ENCODE measurements at regions of chr4 and their contacts with region 1.

Region 1: DNA sequence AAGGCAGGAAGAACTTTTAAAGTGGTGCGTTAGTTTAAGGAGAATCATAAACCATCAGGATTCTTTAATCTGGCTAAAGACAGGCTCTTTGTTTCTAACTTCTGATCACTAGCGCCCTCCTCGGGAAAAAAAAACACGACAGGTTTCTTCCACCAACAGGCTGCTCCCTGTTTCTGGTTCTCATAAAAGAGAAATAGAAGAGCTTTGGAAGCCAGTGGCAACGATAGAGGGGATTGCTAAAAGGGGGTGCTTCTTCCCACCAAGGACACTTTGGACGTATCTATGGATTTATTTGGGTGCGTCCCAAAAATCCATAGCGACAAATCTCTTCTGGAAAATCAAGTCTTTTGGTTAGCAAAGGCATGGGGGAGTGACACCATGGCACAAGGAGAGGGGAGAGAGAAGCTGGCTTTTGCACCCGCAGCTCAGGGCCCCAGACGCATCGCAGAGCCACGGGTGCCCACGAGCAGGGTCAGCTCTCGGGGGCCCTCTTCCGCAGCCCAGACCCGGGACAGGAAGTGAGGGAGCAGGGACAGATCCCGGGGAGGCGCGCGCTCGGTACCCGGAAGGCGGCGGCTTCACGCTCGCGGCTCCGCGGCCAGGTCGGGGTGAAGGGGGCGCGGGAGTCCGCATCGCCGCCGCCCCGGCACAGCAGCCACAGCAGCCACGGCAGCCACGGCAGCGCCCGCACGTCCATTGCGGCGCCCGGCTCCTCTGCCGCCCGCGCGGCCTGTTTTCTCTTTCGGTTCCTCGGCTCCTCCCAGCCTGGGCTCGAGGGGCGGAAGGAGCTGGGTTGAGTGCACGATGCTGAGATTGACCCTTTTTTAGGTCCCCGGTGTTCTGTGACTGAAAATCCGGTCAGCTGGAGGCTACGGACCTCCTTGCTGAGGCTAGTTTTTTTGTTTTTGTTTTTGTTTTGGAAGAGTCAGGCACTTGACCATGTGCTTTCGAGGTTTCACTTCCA is at the start of gene CTSO:
- DNase-seq: peak; percentile 78
- H3K4me3 Mint-ChIP-seq: peak within 1 kb of the TSS; percentile 95
- H3K27ac Mint-ChIP-seq: peak within 1 kb of the TSS; percentile 98
- H3K4me1 Mint-ChIP-seq: peaks cover 18% of the 10 kb centered on the region
- H3K27me3 Mint-ChIP-seq: peaks cover 4% of the 10 kb centered on the region
- total RNA-seq, gene CTSO: 2.1 to 2.6 TPM

Region 2: DNA sequence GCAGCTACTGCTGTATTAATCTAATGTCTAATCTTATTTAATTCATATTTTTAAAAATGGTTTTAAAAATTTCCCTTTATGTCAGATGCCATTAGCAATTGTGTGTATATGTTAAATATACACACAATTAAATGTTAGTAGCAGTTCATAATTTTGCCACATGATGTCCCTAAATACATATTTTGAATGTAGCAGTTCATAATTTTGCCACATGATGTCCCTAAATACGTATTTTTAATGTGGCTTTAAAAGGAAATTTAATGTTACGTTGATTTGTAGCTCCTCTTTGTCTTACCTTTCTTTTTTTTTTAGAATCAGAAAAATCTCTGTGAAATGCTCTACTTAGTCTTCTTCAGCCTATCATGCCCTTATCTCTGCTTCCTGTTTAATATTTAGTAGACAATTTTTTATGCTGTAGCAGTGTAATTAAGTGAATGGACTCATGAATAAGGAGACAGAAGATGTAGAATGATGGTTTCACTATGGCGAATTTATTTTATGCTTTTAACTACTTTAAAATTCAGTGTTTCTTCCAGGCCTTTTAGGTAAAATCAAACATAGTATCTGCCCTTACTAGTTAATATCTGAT is 1146.3 kb before region 1 on chr4:
- CTCF ChIA-PET with region 1: no interaction called
- intact Hi-C with region 1: loop called (anchors 5 kb)
- DNase-seq: no peak
- H3K4me3 Mint-ChIP-seq: no peak overlapping the region
- H3K27ac Mint-ChIP-seq: no peak overlapping the region
- H3K4me1 Mint-ChIP-seq: no peaks in the 10 kb centered on the region
- H3K27me3 Mint-ChIP-seq: peaks cover 5% of the 10 kb centered on the region

Region 3: GRCh38 chr4:155376387-155377268 is 576.8 kb before region 1 on chr4 and contains the start of gene MAP9:
- CTCF ChIA-PET with region 1: interaction called, 3 read pairs
- intact Hi-C with region 1: loop called (anchors 1 kb)
- DNase-seq: peak; percentile 91
- H3K4me3 Mint-ChIP-seq: peak within 1 kb of the TSS; percentile 81
- H3K27ac Mint-ChIP-seq: peak within 1 kb of the TSS; percentile 78
- H3K4me1 Mint-ChIP-seq: peaks cover 11% of the 10 kb centered on the region
- H3K27me3 Mint-ChIP-seq: no peaks in the 10 kb centered on the region
- total RNA-seq, gene MAP9: 5.3 to 6.2 TPM

Region 4: DNA sequence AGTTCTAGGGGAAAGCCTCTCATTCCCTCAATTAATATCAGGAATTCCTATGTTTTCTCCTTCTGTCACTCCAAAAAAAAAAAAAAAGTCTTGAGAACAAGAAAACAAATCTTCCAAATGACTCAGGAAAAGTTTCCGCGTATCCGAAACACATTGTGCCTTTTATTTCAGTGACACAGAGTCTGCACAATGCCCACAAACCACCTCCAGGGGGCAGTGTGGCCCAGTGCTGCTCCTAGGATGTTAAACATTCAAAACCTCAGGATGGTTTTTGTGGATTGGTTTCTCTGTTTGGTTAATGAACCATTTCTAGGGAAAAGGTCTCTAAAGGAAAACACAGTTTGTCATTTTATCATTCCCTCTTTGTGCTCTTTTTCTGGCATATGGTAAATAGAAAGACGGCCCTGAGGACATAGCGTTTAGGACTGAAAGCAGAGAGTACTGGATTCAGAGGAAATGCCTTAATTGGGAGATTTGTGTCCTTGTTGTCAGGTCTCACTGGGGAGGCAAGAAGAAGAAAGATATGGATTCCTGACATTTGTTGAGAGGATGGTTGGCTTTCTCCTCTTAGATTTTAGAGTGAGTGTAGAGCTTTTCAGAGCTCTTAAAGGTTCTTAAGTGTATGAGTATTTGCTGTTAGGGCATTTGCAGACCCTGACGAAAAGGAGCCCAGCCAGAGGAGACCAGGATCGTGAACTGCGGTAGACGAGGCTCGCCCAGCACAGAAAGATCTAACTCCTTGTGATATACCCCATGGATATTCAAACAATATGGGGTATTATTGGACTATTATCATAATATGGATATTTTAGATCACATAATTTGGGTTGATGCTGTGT is 510.9 kb before region 1 on chr4:
- CTCF ChIA-PET with region 1: interaction called, 3 read pairs
- intact Hi-C with region 1: loop called (anchors 1 kb)
- DNase-seq: peak; percentile 76
- H3K4me3 Mint-ChIP-seq: no peak overlapping the region
- H3K27ac Mint-ChIP-seq: no peak overlapping the region
- H3K4me1 Mint-ChIP-seq: no peaks in the 10 kb centered on the region
- H3K27me3 Mint-ChIP-seq: peaks cover 22% of the 10 kb centered on the region

Region 5: DNA sequence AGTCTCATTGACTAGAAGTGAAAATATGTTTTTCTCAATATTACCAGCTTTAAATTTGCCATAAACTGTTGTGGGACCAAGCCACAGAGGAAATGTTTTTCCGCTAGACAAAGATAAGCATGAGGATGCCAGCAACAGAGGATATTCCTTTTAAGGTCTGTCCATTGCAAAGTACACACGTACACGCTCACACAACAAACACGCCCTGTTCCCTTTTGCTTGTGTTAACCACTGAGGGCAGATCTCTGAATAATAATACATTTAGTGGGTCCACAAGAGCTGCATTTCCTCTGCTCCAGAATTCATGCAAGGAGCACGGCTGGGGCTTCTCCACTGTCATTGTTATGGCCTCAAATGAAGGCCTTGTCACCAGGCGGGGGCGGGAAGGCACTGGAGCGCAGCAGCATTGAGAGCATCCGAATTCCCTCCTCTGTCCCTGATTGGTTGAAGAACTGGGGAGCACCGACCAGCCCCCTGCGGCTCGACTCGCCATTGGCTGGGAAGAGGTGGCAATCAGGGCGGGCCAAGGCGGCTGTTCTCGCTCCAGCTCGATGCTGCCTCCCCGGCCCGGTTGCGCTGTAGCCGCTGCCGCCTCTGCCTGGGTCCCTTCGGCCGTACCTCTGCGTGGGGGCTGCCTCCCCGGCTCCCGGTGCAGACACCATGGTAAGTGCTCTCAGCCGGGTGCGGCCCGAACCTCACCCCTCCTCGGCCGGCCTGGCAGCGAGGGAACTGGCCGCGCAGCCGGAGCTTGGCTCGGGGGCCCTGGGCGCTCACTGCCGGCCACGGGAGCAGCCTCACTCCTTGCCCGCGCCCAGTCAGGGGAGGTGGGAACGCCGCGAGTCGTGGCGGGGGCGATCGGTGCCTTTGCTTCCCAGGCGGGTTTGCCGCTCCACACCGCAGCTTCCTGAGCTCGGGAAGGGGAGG is 194.7 kb before region 1 on chr4 and contains the start of gene GUCY1B1:
- CTCF ChIA-PET with region 1: no interaction called
- intact Hi-C with region 1: loop called (anchors 5 kb)
- DNase-seq: peak; percentile 77
- H3K4me3 Mint-ChIP-seq: peak within 1 kb of the TSS; percentile 57
- H3K27ac Mint-ChIP-seq: no peak within 1 kb of the TSS
- H3K4me1 Mint-ChIP-seq: peaks cover 14% of the 10 kb centered on the region
- H3K27me3 Mint-ChIP-seq: peaks cover 32% of the 10 kb centered on the region
- total RNA-seq, gene GUCY1B1: 0.60 to 0.72 TPM

Region 6: GRCh38 chr4:155809835-155810234 is 143.6 kb before region 1 on chr4:
- CTCF ChIA-PET with region 1: interaction called, 21 read pairs
- intact Hi-C with region 1: loop called (anchors 1 kb)
- DNase-seq: peak; percentile 29
- H3K4me3 Mint-ChIP-seq: no peak overlapping the region
- H3K27ac Mint-ChIP-seq: no peak overlapping the region
- H3K4me1 Mint-ChIP-seq: no peaks in the 10 kb centered on the region
- H3K27me3 Mint-ChIP-seq: no peaks in the 10 kb centered on the region

Region 7: DNA sequence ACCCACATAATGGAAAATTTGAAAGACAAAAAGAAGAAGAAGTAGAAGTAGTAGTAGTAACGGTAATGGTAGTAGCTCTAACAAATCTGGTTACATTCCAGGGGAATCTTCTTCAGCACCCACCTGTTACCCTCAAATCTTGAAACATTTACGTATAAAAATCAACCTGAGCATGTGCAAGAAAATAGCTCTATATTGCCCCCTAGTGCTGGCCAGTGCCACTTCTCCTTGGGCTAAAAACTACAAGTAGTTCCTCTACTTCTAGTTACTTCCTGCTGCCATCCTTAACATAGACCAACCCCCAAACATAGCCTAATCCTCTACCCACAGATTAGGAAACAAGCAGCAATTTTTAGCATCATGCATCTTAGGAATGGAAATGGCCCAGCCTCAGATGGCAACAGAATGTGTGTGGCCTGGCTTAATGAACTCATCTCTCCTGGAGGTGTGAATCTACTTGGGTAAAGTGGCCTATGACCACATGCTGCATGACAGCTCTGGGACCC is 1015.1 kb after region 1 on chr4:
- CTCF ChIA-PET with region 1: no interaction called
- intact Hi-C with region 1: loop called (anchors 5 kb)
- DNase-seq: peak; percentile 52
- H3K4me3 Mint-ChIP-seq: no peak overlapping the region
- H3K27ac Mint-ChIP-seq: no peak overlapping the region
- H3K4me1 Mint-ChIP-seq: peaks cover 12% of the 10 kb centered on the region
- H3K27me3 Mint-ChIP-seq: peaks cover 57% of the 10 kb centered on the region